Head of caudate nucleus (tissue), 42 donors: ENCODE measurements at regions of chr13 and their contacts with region 1.

Region 1: DNA sequence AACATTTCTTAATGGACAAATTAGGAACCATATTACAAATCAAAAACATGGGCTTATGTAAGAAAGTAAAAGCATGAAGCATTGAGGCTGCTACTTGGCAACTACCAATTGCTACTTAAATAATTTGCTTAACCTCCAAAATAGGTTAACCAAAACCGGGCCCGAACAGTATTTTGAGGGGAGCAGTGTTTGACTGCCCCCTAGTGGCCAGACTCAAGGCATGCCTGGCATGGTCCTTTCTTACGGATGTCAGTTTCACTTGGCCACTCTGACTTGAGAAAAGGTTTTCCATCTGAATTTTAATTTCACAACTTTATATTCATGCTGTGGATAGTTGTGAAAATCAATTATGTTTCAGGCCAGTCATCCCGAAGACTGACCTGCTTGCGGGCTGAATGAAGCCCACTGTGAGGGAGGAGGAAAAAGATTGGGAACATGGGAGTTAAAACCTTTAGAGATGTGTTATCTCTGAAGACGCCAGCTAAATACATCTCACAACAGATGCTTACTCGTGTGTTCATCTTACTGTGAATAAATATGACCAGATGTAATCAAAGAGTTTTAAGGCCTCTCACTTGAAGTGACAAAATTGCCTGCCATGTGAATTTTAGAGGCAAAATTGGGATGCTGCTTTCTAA is 2.9 kb downstream of the RXFP2 start:
- DNase-seq: peak; percentile 44 to 87 (median 70)

Region 2: DNA sequence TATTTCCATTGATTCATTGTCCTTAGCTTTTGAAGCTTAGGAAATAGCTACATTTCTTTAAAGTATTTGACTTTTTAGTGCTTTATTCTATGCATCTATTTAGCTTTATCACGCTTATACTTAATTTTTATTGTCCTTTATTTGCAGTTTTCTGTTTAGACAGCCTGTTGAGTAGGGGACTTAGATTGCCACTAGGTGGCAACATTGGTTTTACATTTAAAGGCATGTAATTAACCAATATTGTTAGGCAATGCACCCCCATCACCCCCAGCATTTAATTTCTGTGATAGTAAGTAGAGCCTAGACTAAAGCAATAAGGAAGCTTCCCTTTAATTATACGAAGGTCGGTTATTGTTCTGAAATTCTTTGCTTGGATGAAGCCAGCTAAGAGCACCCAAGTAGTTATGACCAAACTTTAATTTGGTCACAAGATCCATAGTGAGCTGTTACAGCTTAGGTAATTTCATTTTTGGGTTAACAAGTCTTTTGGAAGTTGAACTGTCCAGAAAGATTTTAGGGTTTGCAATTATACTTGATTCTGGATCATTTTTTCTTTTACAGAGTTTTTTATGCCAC is 505.9 kb before region 1 on chr13:
- intact Hi-C with region 1: loop called (anchors 10 kb)
- DNase-seq: peak in 5 of 42 donors; percentile 16 to 57 (median 40)

Region 3: DNA sequence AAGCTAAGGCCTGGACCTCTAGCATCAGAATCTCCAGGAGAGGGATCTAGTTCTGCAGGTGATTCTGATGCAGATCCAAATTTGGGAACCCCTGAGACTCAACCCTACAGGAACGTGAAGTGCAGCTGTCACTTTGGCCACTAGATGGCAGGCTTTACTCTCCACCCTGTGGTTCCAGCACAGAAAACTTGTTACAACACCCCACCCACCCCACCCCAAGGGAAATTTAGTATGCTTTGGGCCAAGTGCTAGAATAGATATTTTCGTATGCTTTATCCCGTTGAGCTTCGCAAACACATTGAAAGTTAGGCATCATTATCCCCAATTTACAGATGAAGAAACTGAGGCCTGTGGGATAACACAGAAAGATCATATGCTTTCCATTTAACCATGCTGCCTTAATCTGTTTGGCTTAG is 310.5 kb before region 1 on chr13:
- intact Hi-C with region 1: loop called (anchors 10 kb)
- DNase-seq: peak in 41 of 42 donors; percentile 29 to 84 (median 64)